CD8-positive, alpha-beta T cell (primary cell): ENCODE measurements at regions of chr13 and their contacts with region 1.

Region 1: GRCh38 chr13:30395192-30396084 is 26.9 kb upstream of the UBE2L5 start:
- DNase-seq: peak; percentile 44 to 88 (median 79)
- ATAC-seq: peak; percentile 62
- H3K4me3 ChIP-seq: peak overlapping the region; percentile 60 to 80
- H3K4me3 Mint-ChIP-seq: peak overlapping the region; percentile 89
- H3K27ac ChIP-seq: peak overlapping the region; percentile 83 to 84
- H3K27ac Mint-ChIP-seq: peak overlapping the region; percentile 95
- H3K4me1 ChIP-seq: peaks cover 21% of the 10 kb centered on the region
- H3K4me1 Mint-ChIP-seq: peaks cover 50% of the 10 kb centered on the region
- H3K27me3 ChIP-seq: no peaks in the 10 kb centered on the region
- H3K27me3 Mint-ChIP-seq: no peaks in the 10 kb centered on the region
- CTCF ChIP-seq: no peak

Region 2: GRCh38 chr13:30382836-30383525 is 12.5 kb before region 1 on chr13:
- CTCF ChIA-PET with region 1: interaction called, 15 read pairs
- POLR2A ChIA-PET with region 1: interaction called, 12 read pairs
- intact Hi-C with region 1: no loop called
- DNase-seq: peak in 2 of 9 experiments; percentile 18 to 55
- ATAC-seq: no peak
- H3K4me3 ChIP-seq: no peak overlapping the region
- H3K4me3 Mint-ChIP-seq: peak overlapping the region; percentile 29
- H3K27ac ChIP-seq: no peak overlapping the region
- H3K27ac Mint-ChIP-seq: peak overlapping the region; percentile 8
- H3K4me1 ChIP-seq: peaks cover 28% of the 10 kb centered on the region
- H3K4me1 Mint-ChIP-seq: peaks cover 55% of the 10 kb centered on the region
- H3K27me3 ChIP-seq: no peaks in the 10 kb centered on the region
- H3K27me3 Mint-ChIP-seq: no peaks in the 10 kb centered on the region
- CTCF ChIP-seq: no peak